ENCODE measurements at regions of chr1 and their contacts with region 1.

Region 1: DNA sequence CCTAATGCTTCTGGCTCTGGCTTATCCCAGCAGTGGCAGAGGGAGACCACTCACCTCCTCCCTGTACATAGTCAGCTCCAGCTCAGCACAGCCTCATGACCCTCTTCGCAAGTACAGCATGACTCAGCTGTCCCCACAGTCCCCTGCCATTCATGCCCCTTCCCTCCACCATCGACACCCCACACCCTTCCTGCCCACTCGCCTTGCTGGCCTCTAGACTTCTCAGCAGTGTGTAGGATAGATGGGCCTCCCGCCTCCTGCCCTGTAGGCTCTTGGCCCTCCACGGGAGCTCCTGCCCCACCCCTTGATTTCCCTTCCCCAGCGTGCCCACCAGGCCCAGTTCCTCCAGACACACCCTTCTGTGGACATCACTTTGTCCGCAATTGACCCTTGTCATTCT is 9.8 kb downstream of the NPR1 start:
- DNase-seq: no peak
- H3K4me3 ChIP-seq: no peak overlapping the region
- H3K27ac ChIP-seq: no peak overlapping the region
- H3K4me1 ChIP-seq: no peaks in the 10 kb centered on the region
- H3K27me3 ChIP-seq: no peaks in the 10 kb centered on the region
- CTCF ChIP-seq: no peak
- EP300 ChIP-seq: no peak
- POLR2A ChIP-seq: no peak
- RAD21 ChIP-seq: no peak

Region 2: GRCh38 chr1:153698020-153698931 is 10.0 kb after region 1 on chr1:
- CTCF ChIA-PET with region 1: interaction called, 4 read pairs
- POLR2A ChIA-PET with region 1: interaction called, 11 read pairs
- DNase-seq: peak in 1 of 2 experiments; percentile 65
- H3K4me3 ChIP-seq: peak overlapping the region in 2 of 4 experiments; percentile 8 to 39; a peak in 4 of 8 replicates
- H3K27ac ChIP-seq: peak overlapping the region; percentile 35; the same call in 1 of the 2 replicates
- H3K4me1 ChIP-seq: peaks cover 3 to 18% (median 12%) of the 10 kb centered on the region in 4 experiments
- H3K27me3 ChIP-seq: no peaks in the 10 kb centered on the region
- CTCF ChIP-seq: no peak
- EP300 ChIP-seq: no peak
- POLR2A ChIP-seq: no peak
- RAD21 ChIP-seq: no peak